ENCODE measurements at regions of chr15 and their contacts with region 1.

Region 1: DNA sequence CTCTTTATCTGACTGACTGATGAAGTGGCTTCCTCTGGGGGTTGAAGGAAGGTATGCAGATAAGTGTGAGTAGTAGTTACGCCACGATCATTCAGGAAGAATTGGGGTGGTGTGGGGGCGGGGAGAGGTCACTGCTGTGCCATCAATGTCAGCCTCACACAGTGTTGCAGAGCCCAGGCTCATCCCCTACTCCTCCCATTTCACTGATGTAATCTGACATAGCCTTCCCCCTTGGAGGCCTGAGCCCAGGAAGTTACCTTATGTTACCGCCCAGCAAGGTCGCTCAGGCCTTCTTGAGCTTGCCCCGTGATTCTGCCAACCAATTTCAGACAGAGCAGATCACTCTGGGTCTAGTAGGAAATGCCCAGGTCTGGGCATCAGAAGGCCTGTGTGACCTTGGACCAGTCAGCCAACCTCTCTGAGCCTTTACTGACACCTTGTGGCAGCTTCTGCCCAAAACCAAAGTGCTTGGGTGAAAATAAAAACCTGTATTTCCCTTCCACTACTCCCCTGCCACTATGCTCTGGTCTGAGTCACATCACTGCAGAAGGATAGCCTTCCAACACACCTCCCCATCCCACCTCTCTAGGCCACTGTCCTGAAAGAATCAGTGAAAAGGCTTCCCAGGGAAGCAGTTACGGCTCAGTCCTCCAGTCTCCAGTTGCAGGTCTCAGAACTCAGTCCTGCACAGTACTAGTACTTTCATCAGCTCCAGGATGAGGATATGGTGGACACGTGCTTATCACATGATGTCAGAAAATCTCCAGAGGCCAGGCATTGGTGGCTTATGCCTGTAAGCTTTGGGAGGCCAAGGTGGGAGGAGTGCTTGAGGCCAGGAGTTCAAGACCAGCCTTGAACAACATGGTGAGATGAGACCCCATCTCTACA is 28.1 kb upstream of the INSYN1 start:
- DNase-seq: no peak
- H3K4me3 Mint-ChIP-seq: no peak overlapping the region
- H3K27ac Mint-ChIP-seq: no peak overlapping the region
- H3K4me1 Mint-ChIP-seq: no peaks in the 10 kb centered on the region
- H3K27me3 Mint-ChIP-seq: peaks cover 9% of the 10 kb centered on the region

Region 2: GRCh38 chr15:73560501-73561117 is 220.7 kb before region 1 on chr15:
- intact Hi-C with region 1: loop called (anchors 2 kb)
- DNase-seq: no peak
- H3K4me3 Mint-ChIP-seq: no peak overlapping the region
- H3K27ac Mint-ChIP-seq: no peak overlapping the region
- H3K4me1 Mint-ChIP-seq: peaks cover 9% of the 10 kb centered on the region
- H3K27me3 Mint-ChIP-seq: no peaks in the 10 kb centered on the region

Region 3: DNA sequence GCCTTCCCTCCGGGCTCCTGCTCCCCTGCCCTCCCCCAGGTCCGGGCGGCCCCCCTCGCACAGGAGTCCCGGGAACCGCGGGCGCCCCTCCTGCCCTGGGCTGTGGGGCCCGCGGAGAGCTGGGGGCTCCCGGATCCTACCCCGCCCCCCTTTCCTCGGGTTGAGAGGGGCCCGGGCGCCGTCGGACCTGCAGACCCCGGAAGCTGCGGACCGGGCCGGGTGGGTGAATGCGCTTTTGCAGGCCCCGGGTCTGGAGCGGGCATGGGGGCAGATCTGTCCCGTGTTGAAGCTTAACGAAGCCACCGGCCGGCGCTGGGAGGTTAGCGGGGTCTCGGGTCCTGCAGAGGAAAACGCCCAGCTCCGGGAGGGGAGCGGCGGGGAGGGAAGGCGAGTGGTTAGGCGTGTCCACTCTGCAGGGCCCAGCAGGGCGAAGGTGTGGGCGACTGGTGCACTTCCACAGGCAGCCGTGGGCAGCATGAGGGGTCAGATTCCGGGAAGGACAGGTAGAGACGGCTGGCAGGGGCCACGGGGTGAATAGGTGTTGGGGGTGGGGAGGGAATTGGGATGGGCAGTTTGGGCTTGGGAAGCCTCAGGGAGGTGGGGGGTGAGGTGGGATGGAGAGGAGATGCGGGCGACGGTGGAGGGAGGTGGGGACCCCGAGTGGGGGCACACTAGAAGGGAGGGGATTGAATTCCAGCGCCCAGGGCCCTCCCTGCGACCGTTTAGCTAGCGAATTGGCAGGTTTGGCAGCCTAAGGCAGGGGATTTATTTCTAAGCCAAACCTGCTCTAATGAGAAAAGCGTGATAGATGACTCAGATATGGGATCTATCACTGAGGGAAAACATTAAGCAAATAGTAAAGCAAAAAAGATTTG is 96.5 kb before region 1 on chr15:
- intact Hi-C with region 1: no loop called
- DNase-seq: no peak
- H3K4me3 Mint-ChIP-seq: peak overlapping the region; percentile 82
- H3K27ac Mint-ChIP-seq: no peak overlapping the region
- H3K4me1 Mint-ChIP-seq: peaks cover 36% of the 10 kb centered on the region
- H3K27me3 Mint-ChIP-seq: peaks cover 54% of the 10 kb centered on the region

Measured in activated T-helper 1 cell treated with anti-CD3 and anti-CD28 coated beads, Interleukin-12 subunit alpha, Interleukin-12 subunit beta, Interleukin-2, Interleukin-4 antibody, amounts not matched to agents 30 ng/mL and 10 ng/mL and 1 ng/mL, durations not matched to agents 14 hours and 24 hours and 36 hours (primary cell).